Panc1 (cell line): ENCODE measurements at regions of chr1 and their contacts with region 1.

Region 1: DNA sequence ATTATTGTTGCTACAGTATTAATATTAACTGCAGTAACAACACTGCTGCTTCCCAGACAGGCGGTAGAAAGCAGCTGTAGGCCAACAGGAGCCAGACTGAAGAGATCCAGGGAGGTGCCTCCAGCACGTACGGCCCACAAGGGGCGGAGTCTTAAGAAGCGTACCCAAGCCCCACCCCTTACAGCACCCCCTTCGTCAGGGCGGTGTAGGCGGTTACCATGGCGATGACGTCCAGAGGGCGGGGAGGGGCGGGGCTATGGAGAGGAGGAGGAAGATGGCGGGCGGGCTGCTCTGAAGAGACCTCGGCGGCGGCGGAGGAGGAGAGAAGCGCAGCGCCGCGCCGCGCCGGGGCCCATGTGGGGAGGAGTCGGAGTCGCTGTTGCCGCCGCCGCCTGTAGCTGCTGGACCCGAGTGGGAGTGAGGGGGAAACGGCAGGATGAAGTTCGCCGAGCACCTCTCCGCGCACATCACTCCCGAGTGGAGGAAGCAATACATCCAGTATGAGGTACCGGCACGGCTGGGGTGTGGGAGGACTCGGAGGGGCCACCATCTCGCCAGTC is at the start of gene XPR1:
- DNase-seq: peak; percentile 92
- ATAC-seq: peak; percentile 99
- H3K4me3 ChIP-seq: peak within 1 kb of the TSS; percentile 87 to 93
- H3K27ac ChIP-seq: peak within 1 kb of the TSS; percentile 91
- H3K4me1 ChIP-seq: peaks cover 21% of the 10 kb centered on the region
- H3K27me3 ChIP-seq: no peaks in the 10 kb centered on the region
- CTCF ChIP-seq: peak; percentile 1; the same call in 1 of the 2 replicates
- total RNA-seq, gene XPR1: 36.1 TPM

Region 2: GRCh38 chr1:180863158-180863775 is 231.4 kb after region 1 on chr1:
- CTCF ChIA-PET with region 1: interaction called, 7 read pairs
- POLR2A ChIA-PET with region 1: no interaction called
- in situ Hi-C with region 1: no loop called
- intact Hi-C with region 1: loop called (anchors 5 kb)
- DNase-seq: peak; percentile 47
- ATAC-seq: no peak
- H3K4me3 ChIP-seq: no peak overlapping the region
- H3K27ac ChIP-seq: no peak overlapping the region
- H3K4me1 ChIP-seq: no peaks in the 10 kb centered on the region
- H3K27me3 ChIP-seq: no peaks in the 10 kb centered on the region
- CTCF ChIP-seq: peak; percentile 68; the same call in 1 of the 2 replicates

Region 3: GRCh38 chr1:181181766-181182165 is 549.9 kb after region 1 on chr1:
- CTCF ChIA-PET with region 1: interaction called, 12 read pairs
- POLR2A ChIA-PET with region 1: no interaction called
- in situ Hi-C with region 1: no loop called
- intact Hi-C with region 1: no loop called
- DNase-seq: no peak
- ATAC-seq: no peak
- H3K4me3 ChIP-seq: no peak overlapping the region
- H3K27ac ChIP-seq: no peak overlapping the region
- H3K4me1 ChIP-seq: no peaks in the 10 kb centered on the region
- H3K27me3 ChIP-seq: peaks cover 9% of the 10 kb centered on the region
- CTCF ChIP-seq: no peak